Ascending aorta (tissue), 2 donors: ENCODE measurements at regions of chr17 and their contacts with region 1.

Region 1: GRCh38 chr17:61338000-61338798 is 61.4 kb upstream of the TBX2 start:
- DNase-seq: peak in 1 of 2 donors; percentile 77
- H3K4me3 ChIP-seq: no peak overlapping the region
- H3K27ac ChIP-seq: peak overlapping the region; percentile 56 to 78
- H3K4me1 ChIP-seq: peaks cover 6 to 25% of the 10 kb centered on the region in 2 donors
- H3K27me3 ChIP-seq: no peaks in the 10 kb centered on the region
- CTCF ChIP-seq: no peak

Region 2: DNA sequence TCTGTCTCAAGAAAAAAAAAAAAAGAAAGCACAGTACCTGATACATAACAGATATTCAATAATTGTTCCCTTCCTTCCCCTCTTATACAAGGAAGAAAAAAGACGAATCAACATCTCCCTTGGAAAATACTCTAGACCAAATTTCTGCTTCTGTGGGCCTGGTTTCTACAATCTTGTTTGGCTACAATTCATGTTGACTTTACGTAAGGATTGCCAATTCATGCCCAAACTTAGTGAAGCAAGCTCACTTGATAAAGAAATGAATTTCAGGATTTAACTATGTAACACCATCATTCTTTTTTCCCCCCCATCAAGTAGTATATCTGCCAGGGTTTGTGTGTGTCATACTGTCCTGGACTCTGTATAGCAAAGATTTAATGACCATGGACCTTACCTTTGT is 72.8 kb before region 1 on chr17:
- intact Hi-C with region 1: loop called (anchors 5 kb)
- DNase-seq: no peak
- H3K4me3 ChIP-seq: no peak overlapping the region
- H3K27ac ChIP-seq: peak overlapping the region in 1 of 2 donors; percentile 14
- H3K4me1 ChIP-seq: peaks cover 0 to 21% of the 10 kb centered on the region in 2 donors
- H3K27me3 ChIP-seq: no peaks in the 10 kb centered on the region
- CTCF ChIP-seq: no peak

Region 3: GRCh38 chr17:61366715-61367413 is 28.7 kb after region 1 on chr17:
- intact Hi-C with region 1: no loop called
- DNase-seq: no peak
- H3K4me3 ChIP-seq: no peak overlapping the region
- H3K27ac ChIP-seq: no peak overlapping the region
- H3K4me1 ChIP-seq: no peaks in the 10 kb centered on the region
- H3K27me3 ChIP-seq: no peaks in the 10 kb centered on the region
- CTCF ChIP-seq: no peak

Region 4: GRCh38 chr17:61451538-61452300 is 113.5 kb after region 1 on chr17:
- intact Hi-C with region 1: no loop called
- DNase-seq: no peak
- H3K4me3 ChIP-seq: peak overlapping the region; percentile 34 to 63
- H3K27ac ChIP-seq: no peak overlapping the region
- H3K4me1 ChIP-seq: peaks cover 5 to 14% of the 10 kb centered on the region in 2 donors
- H3K27me3 ChIP-seq: peaks cover 34% of the 10 kb centered on the region
- CTCF ChIP-seq: no peak